Posterior vena cava (tissue), 2 donors: ENCODE measurements at regions of chr2 and their contacts with region 1.

Region 1: DNA sequence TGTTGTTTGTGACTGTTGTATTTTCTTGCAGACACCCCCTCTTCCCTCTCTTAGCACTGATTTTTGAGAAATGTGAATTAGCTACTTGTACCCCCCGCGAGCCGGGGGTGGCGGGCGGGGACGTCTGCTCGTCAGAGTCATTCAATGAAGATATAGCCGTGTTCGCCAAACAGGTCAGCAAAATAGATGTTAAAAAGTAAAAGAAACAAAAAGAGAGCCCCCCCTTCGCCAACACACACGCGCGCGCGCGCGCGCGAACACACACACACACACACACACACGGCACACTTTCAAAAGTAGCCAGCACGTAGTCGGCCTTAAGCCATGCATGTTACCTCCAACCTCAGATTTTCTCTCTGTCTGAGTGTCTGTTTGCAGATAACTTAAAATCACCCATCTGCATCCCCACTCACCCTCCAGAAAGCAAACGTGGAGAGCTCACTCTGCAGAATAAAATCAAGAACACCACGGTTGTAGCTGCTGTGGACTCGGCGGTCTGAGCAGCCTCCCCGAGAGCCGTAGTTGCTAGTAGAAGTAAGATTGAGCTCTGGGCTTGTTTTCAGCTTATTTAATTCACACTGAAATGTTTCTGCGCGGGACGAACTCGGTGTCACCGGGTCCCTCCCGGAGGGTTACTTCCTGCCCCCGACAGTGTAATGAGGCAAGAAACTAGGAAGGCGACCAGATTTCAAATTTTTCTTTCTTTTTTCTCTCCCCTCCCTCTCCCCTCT is 5.1 kb downstream of the MEIS1 start:
- DNase-seq: peak; percentile 55

Region 2: DNA sequence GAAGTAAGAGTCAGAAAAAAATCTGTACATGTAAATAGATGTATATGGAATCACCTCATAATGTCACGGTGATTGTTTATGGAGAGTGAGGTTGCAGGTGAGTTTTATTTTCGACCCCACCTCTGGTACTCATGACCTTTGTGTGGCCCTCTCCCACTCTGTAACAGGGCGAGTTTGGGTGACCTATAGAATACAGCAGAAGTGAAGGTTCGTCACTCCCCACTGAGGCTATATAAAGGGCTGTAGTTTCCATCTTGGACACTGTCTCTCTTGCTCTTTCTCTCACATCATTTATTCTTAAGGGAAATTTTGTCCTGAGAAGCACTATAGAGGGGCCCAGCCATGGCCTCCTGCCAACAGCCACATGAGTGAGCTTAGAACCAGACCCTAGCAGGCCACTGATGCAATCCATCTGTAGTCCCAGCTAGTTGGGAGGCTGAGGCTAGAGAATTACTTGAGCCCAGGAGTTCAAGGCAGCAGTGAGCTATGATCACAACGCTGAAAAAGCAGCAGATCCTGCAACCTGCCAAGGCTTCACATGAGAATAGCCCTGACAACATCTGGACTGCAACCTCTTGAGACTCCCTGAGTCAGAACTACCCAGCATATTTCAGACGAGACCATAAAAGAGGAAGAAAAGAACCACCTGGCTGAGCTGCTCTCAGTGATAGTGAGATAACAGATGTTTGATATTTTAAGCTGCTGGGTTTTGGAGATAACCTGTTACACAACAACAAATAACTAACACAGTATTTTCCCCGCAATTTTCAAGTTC is 1525.1 kb before region 1 on chr2:
- intact Hi-C with region 1: no loop called
- DNase-seq: no peak

Region 3: DNA sequence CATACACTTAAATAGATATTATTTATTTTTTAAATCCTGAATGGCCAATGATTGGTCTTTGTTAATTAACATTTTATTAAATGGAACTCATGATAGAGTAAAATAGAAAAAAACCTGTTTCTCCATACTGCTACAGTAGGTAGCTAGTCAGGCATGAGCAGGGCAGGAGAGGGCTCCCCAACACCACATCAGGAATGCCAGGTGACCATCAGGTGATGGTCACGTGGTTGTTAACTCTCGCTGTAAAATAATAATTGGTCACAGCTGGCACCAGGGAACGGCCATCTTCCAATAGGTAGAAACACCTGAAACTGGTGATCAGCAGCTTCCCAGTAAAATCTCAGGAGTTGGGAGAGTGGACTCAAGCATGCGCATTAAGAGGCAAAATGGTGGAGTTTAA is 167.2 kb after region 1 on chr2:
- intact Hi-C with region 1: no loop called
- DNase-seq: no peak

Region 4: GRCh38 chr2:67322353-67323001 is 882.5 kb after region 1 on chr2:
- intact Hi-C with region 1: loop called in 1 of 2 experiments (anchors 5 kb)
- DNase-seq: peak; percentile 78